ENCODE measurements at regions of chr4 and their contacts with region 1.

Region 1: GRCh38 chr4:20445933-20446723 is 194.4 kb downstream of the SLIT2 start:
- DNase-seq: peak; percentile 33
- ATAC-seq: peak; percentile 65
- H3K4me3 ChIP-seq: no peak overlapping the region
- H3K27ac ChIP-seq: no peak overlapping the region
- H3K4me1 ChIP-seq: peaks cover 3% of the 10 kb centered on the region
- H3K27me3 ChIP-seq: no peaks in the 10 kb centered on the region
- CTCF ChIP-seq: no peak
- POLR2A ChIP-seq: no peak
- RAD21 ChIP-seq: no peak

Region 2: DNA sequence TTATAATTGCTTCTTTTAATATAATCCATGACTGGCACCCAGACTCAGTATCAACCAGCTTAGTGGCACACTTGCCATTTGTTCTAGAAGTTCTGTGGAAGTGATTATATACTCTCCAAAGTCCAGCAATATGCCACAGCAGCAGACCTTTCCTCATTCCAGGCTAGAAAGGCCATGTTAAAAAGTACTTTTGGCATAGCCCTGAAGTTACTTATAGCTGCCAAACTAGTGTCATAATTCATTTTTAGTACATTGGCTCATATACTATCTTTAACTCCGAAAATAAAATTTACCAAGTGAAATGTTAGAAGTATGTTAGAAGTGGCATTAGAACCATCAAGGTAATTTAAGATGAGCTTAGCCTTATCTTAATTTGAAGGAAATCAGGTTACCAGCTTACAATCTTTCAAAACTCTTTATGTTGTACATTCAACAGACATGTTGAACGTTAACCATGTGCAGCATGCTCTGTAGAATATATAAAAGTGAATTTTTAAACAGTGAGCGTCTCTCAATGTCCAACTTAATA is 1710.3 kb before region 1 on chr4:
- CTCF ChIA-PET with region 1: no interaction called
- POLR2A ChIA-PET with region 1: no interaction called
- dilution Hi-C with region 1: no loop called
- in situ Hi-C with region 1: no loop called
- intact Hi-C with region 1: loop called (anchors 5 kb)
- DNase-seq: no peak
- ATAC-seq: no peak
- H3K4me3 ChIP-seq: no peak overlapping the region
- H3K27ac ChIP-seq: no peak overlapping the region
- H3K4me1 ChIP-seq: no peaks in the 10 kb centered on the region
- H3K27me3 ChIP-seq: no peaks in the 10 kb centered on the region
- CTCF ChIP-seq: no peak
- POLR2A ChIP-seq: no peak
- RAD21 ChIP-seq: no peak

Region 3: GRCh38 chr4:20926529-20926928 is 480.4 kb after region 1 on chr4:
- CTCF ChIA-PET with region 1: no interaction called
- POLR2A ChIA-PET with region 1: no interaction called
- dilution Hi-C with region 1: no loop called
- in situ Hi-C with region 1: no loop called
- intact Hi-C with region 1: no loop called
- DNase-seq: no peak
- ATAC-seq: no peak
- H3K4me3 ChIP-seq: no peak overlapping the region
- H3K27ac ChIP-seq: no peak overlapping the region
- H3K4me1 ChIP-seq: no peaks in the 10 kb centered on the region
- H3K27me3 ChIP-seq: no peaks in the 10 kb centered on the region
- CTCF ChIP-seq: no peak
- POLR2A ChIP-seq: no peak
- RAD21 ChIP-seq: no peak

Measured in IMR-90 (cell line).